Panc1 (cell line): ENCODE measurements at regions of chr7 and their contacts with region 1.

Region 1: DNA sequence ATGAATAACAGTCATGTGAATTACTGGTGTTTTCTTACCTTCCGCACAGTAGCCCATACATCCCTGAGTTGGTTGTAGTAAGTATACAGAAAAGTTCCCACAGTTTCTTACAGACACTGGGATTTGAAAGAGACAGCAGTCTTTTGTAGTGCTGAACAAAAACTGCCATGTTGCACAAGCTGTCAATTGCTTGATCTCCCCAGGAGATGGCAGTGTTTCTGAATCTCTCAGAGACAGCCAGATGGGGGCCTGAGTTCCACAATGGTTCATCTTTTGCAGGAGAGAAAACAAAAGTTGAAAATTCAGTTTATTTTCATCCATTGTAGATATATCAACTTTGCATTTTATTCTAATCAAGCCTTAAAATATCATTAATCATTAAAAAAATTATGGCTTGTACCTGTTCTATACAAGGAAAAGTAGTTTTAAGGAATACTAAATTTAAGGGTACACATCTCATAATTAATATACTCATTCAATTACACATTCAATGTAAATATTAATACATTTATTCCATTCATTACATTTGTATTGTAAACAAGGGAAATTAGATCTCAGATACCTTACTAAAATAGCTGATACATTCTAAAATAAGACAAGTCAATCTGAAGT is 14.5 kb downstream of the VWDE start:
- DNase-seq: peak; percentile 54
- ATAC-seq: peak; percentile 94
- H3K4me3 ChIP-seq: no peak overlapping the region
- H3K27ac ChIP-seq: no peak overlapping the region
- H3K4me1 ChIP-seq: 0 out of 2 replicates have a peak, but pooled peaks cover 3% of the 10 kb centered on the region
- H3K27me3 ChIP-seq: no peaks in the 10 kb centered on the region
- CTCF ChIP-seq: peak; percentile 94

Region 2: GRCh38 chr7:12067141-12067831 is 321.9 kb before region 1 on chr7:
- CTCF ChIA-PET with region 1: no interaction called
- POLR2A ChIA-PET with region 1: interaction called, 4 read pairs
- in situ Hi-C with region 1: no loop called
- intact Hi-C with region 1: loop called (anchors 10 kb)
- DNase-seq: no peak
- ATAC-seq: peak; percentile 70; the same call in 1 of the 2 replicates
- H3K4me3 ChIP-seq: no peak overlapping the region
- H3K27ac ChIP-seq: peak overlapping the region; percentile 60; the same call in 1 of the 2 replicates
- H3K4me1 ChIP-seq: peaks cover 10% of the 10 kb centered on the region
- H3K27me3 ChIP-seq: no peaks in the 10 kb centered on the region
- CTCF ChIP-seq: peak; percentile 76

Region 3: DNA sequence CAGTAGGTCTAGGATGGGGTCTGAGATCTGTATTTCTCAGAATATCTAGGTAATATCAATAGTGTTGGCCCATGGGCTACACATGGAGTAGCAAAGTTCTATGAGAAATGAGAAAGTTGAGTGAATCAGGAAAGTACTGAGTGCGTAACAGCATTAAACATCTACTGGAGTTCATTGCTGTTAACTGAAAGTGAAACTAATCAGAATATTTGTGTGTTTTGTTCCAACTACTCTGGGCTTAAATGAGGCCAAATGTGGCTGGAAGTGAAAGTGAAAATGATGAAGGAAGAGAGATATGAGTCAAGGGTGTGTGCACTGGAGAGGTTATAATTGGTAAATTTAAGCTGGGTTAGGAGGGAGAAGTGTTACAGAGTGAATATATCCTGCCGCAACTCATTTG is 131.6 kb before region 1 on chr7:
- CTCF ChIA-PET with region 1: no interaction called
- POLR2A ChIA-PET with region 1: no interaction called
- in situ Hi-C with region 1: no loop called
- intact Hi-C with region 1: no loop called
- DNase-seq: no peak
- ATAC-seq: peak; percentile 77
- H3K4me3 ChIP-seq: peak overlapping the region; percentile 2 to 23; a peak in 3 of 4 replicates
- H3K27ac ChIP-seq: peak overlapping the region; percentile 74
- H3K4me1 ChIP-seq: no peaks in the 10 kb centered on the region
- H3K27me3 ChIP-seq: no peaks in the 10 kb centered on the region
- CTCF ChIP-seq: no peak

Region 4: GRCh38 chr7:12647364-12648219 is 258.4 kb after region 1 on chr7:
- CTCF ChIA-PET with region 1: no interaction called
- POLR2A ChIA-PET with region 1: no interaction called
- in situ Hi-C with region 1: no loop called
- intact Hi-C with region 1: no loop called
- DNase-seq: peak; percentile 83
- ATAC-seq: peak; percentile 97
- H3K4me3 ChIP-seq: no peak overlapping the region
- H3K27ac ChIP-seq: no peak overlapping the region
- H3K4me1 ChIP-seq: no peaks in the 10 kb centered on the region
- H3K27me3 ChIP-seq: no peaks in the 10 kb centered on the region
- CTCF ChIP-seq: no peak